Right lobe of liver (tissue), 6 donors: ENCODE measurements at regions of chr6 and their contacts with region 1.

Region 1: DNA sequence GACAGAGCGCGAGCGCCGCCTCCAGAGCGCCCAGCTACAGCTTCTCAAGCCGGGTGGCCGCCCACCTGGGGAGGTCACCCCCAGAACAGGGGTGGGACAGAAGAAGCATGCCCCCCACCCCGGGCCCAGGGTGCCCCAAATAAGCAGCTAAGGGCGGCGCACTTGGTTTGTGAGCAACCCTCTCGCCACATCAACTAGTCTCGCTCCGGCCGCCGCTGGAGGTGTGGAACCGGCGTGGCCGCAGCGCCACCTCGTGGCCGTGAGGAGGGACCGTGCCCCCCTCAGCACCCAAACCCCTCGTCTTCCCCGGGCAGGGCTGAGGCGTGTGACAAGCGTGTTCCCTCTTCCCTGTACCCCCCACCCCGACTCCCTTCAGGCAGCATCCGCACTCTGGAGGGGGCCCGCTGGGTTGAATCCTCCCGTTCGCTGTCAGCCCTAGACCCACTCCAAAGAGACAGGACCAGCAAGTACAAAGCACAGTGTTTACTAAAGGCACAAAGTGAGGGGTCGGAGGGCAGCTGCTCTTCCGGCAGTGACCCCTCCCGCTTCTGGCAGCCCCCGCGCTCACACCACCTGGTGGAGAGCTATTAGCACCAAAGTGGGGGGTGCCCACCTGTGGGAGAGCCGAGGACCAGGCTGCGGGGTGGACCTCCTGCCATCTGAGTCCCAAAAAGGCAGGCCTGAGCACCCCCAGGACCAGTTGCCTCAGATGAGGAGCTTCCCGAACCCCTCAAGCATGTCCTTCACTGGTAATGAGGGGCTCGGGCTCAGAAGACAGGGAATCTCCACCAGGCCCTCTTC is 45.4 kb downstream of the MDFI start:
- DNase-seq: peak; percentile 75 to 82 (median 82)
- ATAC-seq: peak; percentile 79 to 88 (median 82)
- H3K4me3 ChIP-seq: peak overlapping the region; percentile 9 to 43 (median 38)
- H3K27ac ChIP-seq: no peak overlapping the region
- H3K4me1 ChIP-seq: peaks cover 0 to 6% (median 0%) of the 10 kb centered on the region in 4 donors
- H3K27me3 ChIP-seq: no peaks in the 10 kb centered on the region
- CTCF ChIP-seq: peak; percentile 82 to 92 (median 91)
- POLR2A ChIP-seq: no peak

Region 2: GRCh38 chr6:41367700-41368099 is 316.0 kb before region 1 on chr6:
- intact Hi-C with region 1: loop called (anchors 5 to 10 kb)
- DNase-seq: no peak
- ATAC-seq: peak; percentile 61 to 75 (median 68)
- H3K4me3 ChIP-seq: no peak overlapping the region
- H3K27ac ChIP-seq: no peak overlapping the region
- H3K4me1 ChIP-seq: peaks cover 0 to 12% (median 0%) of the 10 kb centered on the region in 4 donors
- H3K27me3 ChIP-seq: peaks cover 0 to 18% of the 10 kb centered on the region in 2 donors
- CTCF ChIP-seq: peak; percentile 43 to 54 (median 51)
- POLR2A ChIP-seq: no peak

Region 3: DNA sequence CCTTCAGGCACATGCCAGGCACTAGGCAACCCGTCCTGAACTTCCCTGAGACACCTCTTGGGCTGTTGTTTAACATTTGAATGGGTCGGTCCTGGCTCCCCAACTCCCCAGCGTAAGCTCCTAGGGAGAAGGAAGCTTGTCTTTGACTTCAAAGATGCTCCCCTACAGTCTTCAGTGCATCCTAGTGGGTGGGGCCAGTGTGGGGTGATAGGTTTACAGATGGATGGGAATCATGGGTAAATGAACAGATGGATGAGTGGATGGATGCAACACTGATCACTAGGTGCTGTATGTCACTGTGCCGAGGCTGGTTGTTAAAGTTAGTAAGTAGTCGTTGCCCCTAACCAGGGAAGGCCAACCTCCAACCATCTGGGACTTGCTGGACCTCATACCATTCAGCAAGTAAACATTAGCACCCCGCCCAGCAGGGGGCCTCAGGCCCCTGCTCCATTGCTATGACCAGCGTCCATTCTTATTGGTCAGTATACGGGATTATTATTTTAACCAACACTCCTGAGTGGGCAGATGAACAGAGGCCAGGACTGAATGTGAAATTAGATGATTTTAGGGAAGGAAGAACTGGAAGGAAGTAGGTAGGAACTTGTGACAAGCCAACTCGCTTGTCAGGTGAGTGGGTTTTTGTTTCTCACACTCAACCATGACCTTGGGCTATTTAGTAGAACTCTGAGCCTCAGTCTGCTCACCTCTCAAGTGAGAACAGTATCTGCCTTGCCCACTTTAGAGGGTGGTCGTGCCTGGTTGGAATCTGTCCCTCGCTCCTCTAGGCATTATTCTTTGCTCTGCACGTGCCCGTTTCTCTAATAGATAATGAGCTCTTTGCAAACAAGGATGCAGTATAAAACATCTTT is 220.4 kb before region 1 on chr6:
- intact Hi-C with region 1: loop called in 1 of 2 experiments (anchors 10 kb)
- DNase-seq: peak; percentile 70 to 76 (median 74)
- ATAC-seq: peak; percentile 91 to 98 (median 94)
- H3K4me3 ChIP-seq: no peak overlapping the region
- H3K27ac ChIP-seq: no peak overlapping the region
- H3K4me1 ChIP-seq: no peaks in the 10 kb centered on the region
- H3K27me3 ChIP-seq: no peaks in the 10 kb centered on the region
- CTCF ChIP-seq: peak; percentile 66 to 76 (median 70)
- POLR2A ChIP-seq: no peak

Region 4: DNA sequence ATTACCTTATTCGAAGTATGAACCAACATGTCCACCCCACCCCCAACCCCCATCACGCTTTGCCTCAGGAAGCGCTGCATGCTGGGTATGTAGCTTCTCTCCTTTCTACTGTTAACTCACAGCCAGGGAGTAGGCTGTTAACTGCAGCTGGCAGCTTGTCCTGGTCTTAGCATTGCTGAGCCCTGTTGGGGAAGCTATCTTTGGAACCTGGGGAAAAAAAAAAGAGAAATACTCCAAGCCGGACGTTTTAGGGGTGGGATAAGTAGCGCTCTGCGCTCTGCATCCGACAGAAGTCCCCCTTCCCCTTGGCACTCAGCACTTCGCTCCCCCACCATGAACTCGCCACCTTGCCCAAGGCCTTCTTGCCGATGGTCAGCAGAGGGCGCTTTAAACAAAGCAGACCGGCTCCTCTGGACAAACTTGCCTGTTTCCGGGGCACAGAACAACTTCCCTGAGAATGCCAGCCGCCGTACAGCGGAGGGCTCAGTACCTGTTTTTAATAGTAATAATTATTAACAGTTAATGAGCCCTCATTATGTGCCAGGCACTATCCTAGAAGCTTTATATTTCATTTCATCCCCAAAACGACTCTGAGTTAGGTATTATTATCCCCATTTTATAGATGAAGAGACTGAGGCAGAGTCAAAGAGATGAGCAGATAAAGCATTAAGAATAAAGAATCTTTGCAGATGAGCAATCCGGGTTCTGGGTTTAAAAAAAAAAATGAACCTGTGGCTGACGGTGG is 80.7 kb before region 1 on chr6:
- intact Hi-C with region 1: loop called (anchors 2 to 5 kb)
- DNase-seq: peak; percentile 78 to 79 (median 78)
- ATAC-seq: peak; percentile 79 to 91 (median 87)
- H3K4me3 ChIP-seq: no peak overlapping the region
- H3K27ac ChIP-seq: no peak overlapping the region
- H3K4me1 ChIP-seq: peaks cover 0 to 5% (median 0%) of the 10 kb centered on the region in 4 donors
- H3K27me3 ChIP-seq: no peaks in the 10 kb centered on the region
- CTCF ChIP-seq: peak; percentile 70 to 89 (median 86)
- POLR2A ChIP-seq: no peak